CD8-positive, alpha-beta T cell (primary cell): ENCODE measurements at regions of chr19 and their contacts with region 1.

Region 1: DNA sequence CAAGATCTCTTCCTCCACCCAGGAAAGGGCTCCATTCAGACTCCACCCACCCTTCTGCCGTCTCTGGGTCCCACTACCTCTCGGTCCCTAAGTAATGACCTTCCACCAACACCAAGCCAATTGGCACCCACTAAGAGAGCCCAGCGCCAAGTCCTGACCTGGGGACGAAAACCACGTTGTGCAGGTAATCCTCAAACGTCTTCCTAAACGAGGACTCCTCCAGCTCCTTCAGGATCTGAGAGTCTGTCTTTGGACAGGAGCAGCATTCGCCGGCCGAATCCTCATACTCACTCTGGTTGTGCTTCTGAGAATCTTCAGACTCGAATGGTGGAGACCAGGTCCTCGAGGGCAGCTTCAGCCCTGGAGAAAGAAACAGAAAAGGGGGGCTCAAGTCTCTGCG is 83.1 kb downstream of the ZNF557 start:
- DNase-seq: no peak
- ATAC-seq: no peak
- H3K4me3 ChIP-seq: no peak overlapping the region
- H3K4me3 Mint-ChIP-seq: no peak overlapping the region
- H3K27ac ChIP-seq: no peak overlapping the region
- H3K27ac Mint-ChIP-seq: no peak overlapping the region
- H3K4me1 ChIP-seq: no peaks in the 10 kb centered on the region
- H3K4me1 Mint-ChIP-seq: peaks cover 3% of the 10 kb centered on the region
- H3K27me3 ChIP-seq: peaks cover 0 to 3% of the 10 kb centered on the region in 2 experiments
- H3K27me3 Mint-ChIP-seq: no peaks in the 10 kb centered on the region
- CTCF ChIP-seq: no peak

Region 2: GRCh38 chr19:7137120-7137519 is 15.4 kb before region 1 on chr19:
- CTCF ChIA-PET with region 1: interaction called, 19 read pairs
- POLR2A ChIA-PET with region 1: no interaction called
- intact Hi-C with region 1: no loop called
- DNase-seq: no peak
- ATAC-seq: no peak
- H3K4me3 ChIP-seq: no peak overlapping the region
- H3K4me3 Mint-ChIP-seq: no peak overlapping the region
- H3K27ac ChIP-seq: no peak overlapping the region
- H3K27ac Mint-ChIP-seq: no peak overlapping the region
- H3K4me1 ChIP-seq: no peaks in the 10 kb centered on the region
- H3K4me1 Mint-ChIP-seq: no peaks in the 10 kb centered on the region
- H3K27me3 ChIP-seq: no peaks in the 10 kb centered on the region
- H3K27me3 Mint-ChIP-seq: no peaks in the 10 kb centered on the region
- CTCF ChIP-seq: no peak

Region 3: DNA sequence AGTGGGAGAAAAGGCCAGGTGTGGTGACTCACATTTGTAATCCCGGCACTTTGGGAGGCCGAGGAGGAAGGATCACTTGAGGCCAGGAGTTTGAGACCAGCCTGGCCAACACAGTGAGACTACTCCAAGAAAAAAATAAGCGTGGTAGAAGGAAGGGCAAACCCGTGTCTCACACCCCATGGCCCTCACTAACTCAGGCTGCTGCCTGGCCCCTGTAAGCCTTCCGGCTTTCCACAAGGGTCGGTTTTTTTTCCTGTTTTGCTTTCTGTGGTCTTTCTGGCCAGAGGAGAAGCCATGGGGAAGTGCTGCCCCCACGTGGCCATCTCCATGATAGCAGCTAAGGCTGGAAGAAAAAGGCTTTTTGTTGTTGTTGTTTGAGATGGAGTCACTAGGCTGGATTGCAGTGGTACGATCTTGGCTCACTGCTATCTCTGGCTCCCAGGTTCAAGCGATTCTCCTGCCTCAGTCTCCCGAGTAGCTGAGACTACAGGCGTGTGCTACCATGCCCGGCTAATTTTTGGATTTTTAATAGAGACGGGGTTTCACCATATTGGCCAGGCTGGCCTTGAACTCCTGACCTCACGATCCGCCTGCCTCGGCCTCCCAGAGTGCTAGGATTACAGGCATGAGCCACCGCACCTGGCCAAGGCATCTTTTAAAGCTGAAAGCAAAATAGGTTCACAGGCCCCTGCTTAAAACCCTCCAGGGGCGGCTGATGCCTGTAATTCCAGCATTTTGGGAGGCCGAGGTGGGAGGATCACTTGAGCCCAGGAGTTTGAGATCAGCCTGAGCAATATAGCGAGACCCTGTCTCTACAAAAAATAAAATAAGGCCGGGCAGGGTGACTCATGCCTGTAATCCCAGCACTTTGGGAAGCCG is 188.6 kb after region 1 on chr19:
- CTCF ChIA-PET with region 1: interaction called, 49 read pairs
- POLR2A ChIA-PET with region 1: no interaction called
- intact Hi-C with region 1: loop called (anchors 1 kb)
- DNase-seq: peak; percentile 77 to 96 (median 84)
- ATAC-seq: peak; percentile 27
- H3K4me3 ChIP-seq: no peak overlapping the region
- H3K4me3 Mint-ChIP-seq: no peak overlapping the region
- H3K27ac ChIP-seq: no peak overlapping the region
- H3K27ac Mint-ChIP-seq: peak overlapping the region; percentile 85
- H3K4me1 ChIP-seq: peaks cover 49% of the 10 kb centered on the region
- H3K4me1 Mint-ChIP-seq: peaks cover 52% of the 10 kb centered on the region
- H3K27me3 ChIP-seq: no peaks in the 10 kb centered on the region
- H3K27me3 Mint-ChIP-seq: no peaks in the 10 kb centered on the region
- CTCF ChIP-seq: peak; percentile 93

Region 4: GRCh38 chr19:7348587-7349230 is 196.1 kb after region 1 on chr19 and contains the start of gene ARHGEF18:
- CTCF ChIA-PET with region 1: interaction called, 11 read pairs
- POLR2A ChIA-PET with region 1: no interaction called
- intact Hi-C with region 1: no loop called
- DNase-seq: peak; percentile 14 to 85 (median 68)
- ATAC-seq: peak; percentile 68
- H3K4me3 ChIP-seq: peak within 1 kb of the TSS; percentile 92 to 96
- H3K4me3 Mint-ChIP-seq: peak within 1 kb of the TSS; percentile 90
- H3K27ac ChIP-seq: peak within 1 kb of the TSS; percentile 74 to 83
- H3K27ac Mint-ChIP-seq: peak within 1 kb of the TSS; percentile 96
- H3K4me1 ChIP-seq: peaks cover 62% of the 10 kb centered on the region
- H3K4me1 Mint-ChIP-seq: peaks cover 70% of the 10 kb centered on the region
- H3K27me3 ChIP-seq: no peaks in the 10 kb centered on the region
- H3K27me3 Mint-ChIP-seq: no peaks in the 10 kb centered on the region
- CTCF ChIP-seq: no peak
- total RNA-seq, gene ARHGEF18: 78.8 to 81.0 TPM

Region 5: GRCh38 chr19:7376151-7376852 is 223.7 kb after region 1 on chr19:
- CTCF ChIA-PET with region 1: interaction called, 4 read pairs
- POLR2A ChIA-PET with region 1: no interaction called
- intact Hi-C with region 1: loop called (anchors 1 to 5 kb)
- DNase-seq: no peak
- ATAC-seq: no peak
- H3K4me3 ChIP-seq: no peak overlapping the region
- H3K4me3 Mint-ChIP-seq: no peak overlapping the region
- H3K27ac ChIP-seq: no peak overlapping the region
- H3K27ac Mint-ChIP-seq: peak overlapping the region; percentile 18
- H3K4me1 ChIP-seq: no peaks in the 10 kb centered on the region
- H3K4me1 Mint-ChIP-seq: peaks cover 10% of the 10 kb centered on the region
- H3K27me3 ChIP-seq: no peaks in the 10 kb centered on the region
- H3K27me3 Mint-ChIP-seq: no peaks in the 10 kb centered on the region
- CTCF ChIP-seq: no peak